Right ventricle myocardium inferior (tissue), 1 donor: ENCODE measurements at regions of chr22 and their contacts with region 1.

Region 1: GRCh38 chr22:28600546-28601143 is 79.0 kb downstream of the TTC28 start:
- DNase-seq: no peak
- ATAC-seq: no peak

Region 2: GRCh38 chr22:28505416-28506149 is 95.1 kb before region 1 on chr22:
- intact Hi-C with region 1: no loop called
- DNase-seq: no peak
- ATAC-seq: no peak

Region 3: GRCh38 chr22:28656181-28656580 is 55.5 kb after region 1 on chr22:
- intact Hi-C with region 1: no loop called
- DNase-seq: no peak
- ATAC-seq: no peak

Region 4: GRCh38 chr22:28829358-28830181 is 228.9 kb after region 1 on chr22:
- intact Hi-C with region 1: loop called (anchors 1 kb)
- DNase-seq: peak; percentile 88
- ATAC-seq: peak; percentile 87

Region 5: DNA sequence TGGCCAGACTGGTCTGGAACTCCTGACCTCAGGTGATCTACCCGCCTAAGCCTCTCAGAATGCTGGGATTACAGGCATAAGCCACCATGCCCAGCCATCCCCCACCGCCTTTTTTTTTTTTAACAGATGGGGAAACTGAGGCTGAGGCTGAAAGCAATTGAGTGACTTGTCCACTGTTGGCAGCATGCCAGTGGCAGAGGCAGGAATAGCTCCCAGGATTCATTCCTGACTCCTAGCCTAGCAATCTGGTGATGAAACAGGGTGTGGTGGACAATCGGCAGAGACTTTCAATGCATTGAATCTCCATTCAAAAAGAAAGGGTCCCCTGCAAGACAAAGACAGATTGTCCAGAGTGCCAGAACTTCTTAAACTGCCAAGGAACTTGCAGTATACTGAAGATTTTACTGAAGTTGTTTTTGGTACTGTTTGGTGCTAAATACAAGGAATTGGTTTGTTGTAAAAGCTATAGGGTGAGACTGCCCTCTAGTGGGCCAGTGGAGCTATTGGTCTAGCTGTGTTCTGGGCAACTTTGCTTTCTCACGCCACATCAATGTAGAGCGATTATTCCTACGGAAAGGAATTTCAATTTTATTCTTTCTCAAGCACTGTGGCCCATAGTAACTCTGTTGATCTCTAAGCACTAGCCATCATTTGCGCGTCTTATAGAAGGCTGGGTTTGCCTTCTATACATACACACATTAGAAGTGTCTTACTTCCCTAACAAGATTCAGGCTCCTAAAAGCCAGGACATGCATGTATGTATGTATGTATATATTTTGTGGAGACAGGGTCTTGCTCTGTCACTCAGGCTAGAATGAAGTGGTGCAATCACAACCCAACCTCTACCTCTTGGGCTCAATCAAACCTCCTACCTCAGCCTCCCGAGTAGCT is 440.0 kb after region 1 on chr22:
- intact Hi-C with region 1: loop called (anchors 10 kb)
- DNase-seq: no peak
- ATAC-seq: peak; percentile 83